ENCODE measurements at regions of chr9 and their contacts with region 1.

Region 1: DNA sequence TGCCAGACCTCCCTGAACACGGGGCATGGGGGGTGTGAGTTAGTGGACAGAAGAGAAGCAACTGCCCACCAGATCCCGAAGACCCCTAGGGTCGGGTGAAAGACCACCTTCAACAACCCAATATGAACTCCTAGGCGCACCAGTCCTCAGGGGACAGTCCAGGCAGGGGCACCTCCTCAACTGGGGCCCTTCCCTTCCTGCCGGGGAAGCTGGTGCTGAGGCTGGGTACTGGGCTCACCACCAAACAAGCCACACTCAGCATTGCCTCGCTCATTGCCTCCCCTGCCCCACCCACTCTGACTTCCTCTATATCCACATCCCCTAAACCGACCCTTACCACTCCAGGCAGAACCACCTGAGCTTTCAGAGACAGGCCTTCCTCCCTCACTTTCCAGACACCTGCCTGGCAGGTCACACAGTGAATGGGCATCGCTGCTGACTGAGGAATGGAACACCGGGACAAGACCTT is 42.5 kb downstream of the SEMA4D start:
- DNase-seq: peak in 7 of 9 experiments; percentile 46 to 78 (median 56)
- ATAC-seq: peak; percentile 53
- H3K4me3 ChIP-seq: peak overlapping the region in 1 of 2 experiments; percentile 7
- H3K4me3 Mint-ChIP-seq: peak overlapping the region; percentile 61
- H3K27ac ChIP-seq: peak overlapping the region; percentile 47 to 69
- H3K27ac Mint-ChIP-seq: peak overlapping the region; percentile 98
- H3K4me1 ChIP-seq: peaks cover 90% of the 10 kb centered on the region
- H3K4me1 Mint-ChIP-seq: peaks cover 94% of the 10 kb centered on the region
- H3K27me3 ChIP-seq: no peaks in the 10 kb centered on the region
- H3K27me3 Mint-ChIP-seq: no peaks in the 10 kb centered on the region
- CTCF ChIP-seq: no peak

Region 2: GRCh38 chr9:89059925-89060506 is 395.4 kb before region 1 on chr9:
- CTCF ChIA-PET with region 1: no interaction called
- POLR2A ChIA-PET with region 1: no interaction called
- intact Hi-C with region 1: no loop called
- DNase-seq: no peak
- ATAC-seq: no peak
- H3K4me3 ChIP-seq: no peak overlapping the region
- H3K4me3 Mint-ChIP-seq: no peak overlapping the region
- H3K27ac ChIP-seq: no peak overlapping the region
- H3K27ac Mint-ChIP-seq: no peak overlapping the region
- H3K4me1 ChIP-seq: no peaks in the 10 kb centered on the region
- H3K4me1 Mint-ChIP-seq: no peaks in the 10 kb centered on the region
- H3K27me3 ChIP-seq: no peaks in the 10 kb centered on the region
- H3K27me3 Mint-ChIP-seq: peaks cover 3% of the 10 kb centered on the region
- CTCF ChIP-seq: no peak

Region 3: GRCh38 chr9:89437000-89437631 is 18.3 kb before region 1 on chr9:
- CTCF ChIA-PET with region 1: interaction called, 3 read pairs
- POLR2A ChIA-PET with region 1: interaction called, 12 read pairs
- intact Hi-C with region 1: no loop called
- DNase-seq: peak; percentile 45 to 91 (median 74)
- ATAC-seq: peak; percentile 91
- H3K4me3 ChIP-seq: peak overlapping the region in 1 of 2 experiments; percentile 13
- H3K4me3 Mint-ChIP-seq: peak overlapping the region; percentile 64
- H3K27ac ChIP-seq: peak overlapping the region; percentile 19 to 66
- H3K27ac Mint-ChIP-seq: peak overlapping the region; percentile 98
- H3K4me1 ChIP-seq: peaks cover 98% of the 10 kb centered on the region
- H3K4me1 Mint-ChIP-seq: peaks cover 89% of the 10 kb centered on the region
- H3K27me3 ChIP-seq: no peaks in the 10 kb centered on the region
- H3K27me3 Mint-ChIP-seq: no peaks in the 10 kb centered on the region
- CTCF ChIP-seq: no peak

Region 4: GRCh38 chr9:89442981-89443814 is 12.2 kb before region 1 on chr9:
- CTCF ChIA-PET with region 1: interaction called, 3 read pairs
- POLR2A ChIA-PET with region 1: interaction called, 21 read pairs
- intact Hi-C with region 1: loop called in 1 of 2 experiments (anchors 1 kb)
- DNase-seq: no peak
- ATAC-seq: no peak
- H3K4me3 ChIP-seq: peak overlapping the region in 1 of 2 experiments; percentile 10
- H3K4me3 Mint-ChIP-seq: no peak overlapping the region
- H3K27ac ChIP-seq: peak overlapping the region; percentile 46 to 50
- H3K27ac Mint-ChIP-seq: peak overlapping the region; percentile 97
- H3K4me1 ChIP-seq: peaks cover 97% of the 10 kb centered on the region
- H3K4me1 Mint-ChIP-seq: peaks cover 89% of the 10 kb centered on the region
- H3K27me3 ChIP-seq: no peaks in the 10 kb centered on the region
- H3K27me3 Mint-ChIP-seq: no peaks in the 10 kb centered on the region
- CTCF ChIP-seq: no peak

Region 5: GRCh38 chr9:89477811-89478630 is 22.6 kb after region 1 on chr9:
- CTCF ChIA-PET with region 1: interaction called, 6 read pairs
- POLR2A ChIA-PET with region 1: interaction called, 14 read pairs
- intact Hi-C with region 1: no loop called
- DNase-seq: peak in 6 of 9 experiments; percentile 36 to 72 (median 66)
- ATAC-seq: peak; percentile 35
- H3K4me3 ChIP-seq: peak overlapping the region; percentile 44 to 50
- H3K4me3 Mint-ChIP-seq: peak overlapping the region; percentile 91
- H3K27ac ChIP-seq: peak overlapping the region; percentile 26 to 65
- H3K27ac Mint-ChIP-seq: peak overlapping the region; percentile 99
- H3K4me1 ChIP-seq: peaks cover 82% of the 10 kb centered on the region
- H3K4me1 Mint-ChIP-seq: peaks cover 90% of the 10 kb centered on the region
- H3K27me3 ChIP-seq: no peaks in the 10 kb centered on the region
- H3K27me3 Mint-ChIP-seq: no peaks in the 10 kb centered on the region
- CTCF ChIP-seq: no peak

Region 6: GRCh38 chr9:89489548-89490530 is 34.4 kb after region 1 on chr9:
- CTCF ChIA-PET with region 1: interaction called, 3 read pairs
- POLR2A ChIA-PET with region 1: interaction called, 7 read pairs
- intact Hi-C with region 1: loop called (anchors 2 to 5 kb)
- DNase-seq: peak in 2 of 9 experiments; percentile 85 to 92
- ATAC-seq: peak; percentile 85
- H3K4me3 ChIP-seq: peak overlapping the region in 1 of 2 experiments; percentile 9
- H3K4me3 Mint-ChIP-seq: peak overlapping the region; percentile 72
- H3K27ac ChIP-seq: peak overlapping the region; percentile 1 to 73
- H3K27ac Mint-ChIP-seq: peak overlapping the region; percentile 92
- H3K4me1 ChIP-seq: peaks cover 91% of the 10 kb centered on the region
- H3K4me1 Mint-ChIP-seq: peaks cover 93% of the 10 kb centered on the region
- H3K27me3 ChIP-seq: no peaks in the 10 kb centered on the region
- H3K27me3 Mint-ChIP-seq: no peaks in the 10 kb centered on the region
- CTCF ChIP-seq: no peak